ENCODE measurements at regions of chr17 and their contacts with region 1.

Region 1: DNA sequence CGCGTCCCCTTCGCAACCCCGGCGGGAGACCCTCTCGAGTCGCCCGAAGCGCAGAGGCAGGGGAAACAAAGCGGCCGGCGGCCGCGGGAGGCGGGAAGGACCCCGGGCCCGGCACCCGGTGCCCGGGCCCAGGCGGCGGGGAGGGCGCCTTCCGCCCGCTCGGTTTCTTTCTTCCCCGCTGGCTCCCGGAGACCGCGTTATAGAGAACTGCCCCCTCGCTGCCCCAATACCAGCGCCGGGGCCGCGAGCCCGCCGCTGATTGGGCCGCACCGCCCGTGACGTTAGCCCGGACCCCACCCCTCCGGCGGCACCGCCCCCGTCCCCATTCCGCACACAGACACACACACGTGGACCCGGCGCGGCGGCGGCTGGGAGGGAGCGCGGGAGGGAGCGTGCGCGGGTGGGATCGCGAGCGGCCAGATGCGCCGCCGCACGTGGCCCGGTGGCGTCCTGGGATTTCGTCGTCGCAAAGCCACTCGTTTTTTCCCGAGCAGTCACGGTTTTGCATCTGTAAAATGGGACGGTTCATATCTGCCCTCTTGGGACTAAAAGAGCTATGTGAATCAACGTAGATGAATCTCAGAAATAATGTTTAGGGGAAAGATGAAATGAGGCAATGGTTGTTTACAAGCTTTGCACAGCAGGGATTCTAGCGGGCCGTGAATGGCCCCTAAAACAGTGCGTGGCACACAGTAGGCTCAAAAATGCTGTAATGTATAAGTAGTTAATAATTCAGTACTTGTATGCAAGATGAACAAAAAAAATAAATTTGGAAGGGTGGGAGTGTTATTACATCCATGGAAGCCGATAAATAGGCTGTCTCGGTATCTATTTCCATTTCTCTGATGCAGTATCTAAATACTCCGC is at the start of gene EPOP:
- DNase-seq: peak; percentile 77 to 95
- H3K4me3 ChIP-seq: peak within 1 kb of the TSS; percentile 65
- H3K4me1 ChIP-seq: peaks cover 14% of the 10 kb centered on the region
- H3K27me3 ChIP-seq: no peaks in the 10 kb centered on the region

Region 2: DNA sequence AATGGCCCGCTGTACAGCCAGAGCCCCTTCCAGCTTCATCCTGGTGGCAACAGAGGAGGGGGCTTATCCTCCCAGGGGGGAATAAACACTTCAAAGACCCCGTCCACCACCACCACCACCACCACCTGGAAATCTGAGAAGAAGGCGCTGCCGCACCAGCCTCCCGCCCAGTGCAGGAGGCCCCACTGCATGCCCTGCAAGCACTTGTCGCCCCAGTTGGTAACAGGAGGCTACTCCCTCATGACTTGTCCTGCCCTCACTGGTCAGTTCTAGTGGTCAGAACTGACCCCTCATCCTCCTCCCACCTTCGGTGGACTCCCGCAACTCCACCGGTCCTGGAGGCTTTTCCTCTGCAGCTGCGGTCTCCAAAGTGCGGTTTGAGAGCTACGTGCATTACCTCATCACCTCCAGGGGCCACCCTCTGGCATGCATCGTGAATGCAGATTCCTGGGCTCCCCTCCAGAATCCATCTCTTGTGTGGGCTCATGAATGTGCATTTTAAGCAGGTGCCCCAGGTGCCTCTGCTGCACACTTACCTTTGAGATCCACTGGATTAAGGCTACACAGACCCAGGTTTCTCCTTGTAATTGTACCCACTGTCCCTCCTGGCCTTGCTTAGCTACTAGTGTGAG is 141.0 kb before region 1 on chr17:
- in situ Hi-C with region 1: no loop called
- DNase-seq: no peak
- H3K4me3 ChIP-seq: no peak overlapping the region
- H3K4me1 ChIP-seq: no peaks in the 10 kb centered on the region
- H3K27me3 ChIP-seq: 0 out of 2 replicates have a peak, but pooled peaks cover 3% of the 10 kb centered on the region

Region 3: GRCh38 chr17:38605888-38606645 is 68.9 kb before region 1 on chr17 and contains the start of gene SRCIN1:
- in situ Hi-C with region 1: no loop called
- DNase-seq: peak; percentile 68 to 84
- H3K4me3 ChIP-seq: peak within 1 kb of the TSS; percentile 45
- H3K4me1 ChIP-seq: peaks cover 32% of the 10 kb centered on the region
- H3K27me3 ChIP-seq: no peaks in the 10 kb centered on the region

Region 4: GRCh38 chr17:38628441-38628840 is 46.5 kb before region 1 on chr17:
- in situ Hi-C with region 1: loop called (anchors 5 kb)
- DNase-seq: peak in 1 of 2 experiments; percentile 67
- H3K4me3 ChIP-seq: no peak overlapping the region
- H3K4me1 ChIP-seq: peaks cover 5% of the 10 kb centered on the region
- H3K27me3 ChIP-seq: no peaks in the 10 kb centered on the region

Region 5: GRCh38 chr17:38729886-38730525 is 55.0 kb after region 1 on chr17 and contains the start of gene CISD3:
- in situ Hi-C with region 1: loop called (anchors 5 kb)
- DNase-seq: peak; percentile 86 to 89
- H3K4me3 ChIP-seq: peak within 1 kb of the TSS; percentile 71
- H3K4me1 ChIP-seq: peaks cover 7% of the 10 kb centered on the region
- H3K27me3 ChIP-seq: no peaks in the 10 kb centered on the region

Measured in HAP-1 (cell line).